Heart left ventricle (tissue), 16 donors: ENCODE measurements at regions of chr16 and their contacts with region 1.

Region 1: GRCh38 chr16:27313422-27314160 is at the start of gene IL4R:
- DNase-seq: peak; percentile 78 to 89 (median 85)
- ATAC-seq: peak; percentile 21 to 62 (median 48)
- H3K4me3 ChIP-seq: peak within 1 kb of the TSS; percentile 63 to 99 (median 86)
- H3K27ac ChIP-seq: peak within 1 kb of the TSS; percentile 89 to 99 (median 96)
- H3K4me1 ChIP-seq: peaks cover 4 to 53% (median 29%) of the 10 kb centered on the region in 12 donors
- H3K27me3 ChIP-seq: peaks cover 0 to 6% (median 0%) of the 10 kb centered on the region in 9 donors
- CTCF ChIP-seq: no peak
- POLR2A ChIP-seq: peak in 1 of 2 donors; percentile 53
- total RNA-seq, gene IL4R: 6.7 to 47.4 (median 8.2) TPM

Region 2: DNA sequence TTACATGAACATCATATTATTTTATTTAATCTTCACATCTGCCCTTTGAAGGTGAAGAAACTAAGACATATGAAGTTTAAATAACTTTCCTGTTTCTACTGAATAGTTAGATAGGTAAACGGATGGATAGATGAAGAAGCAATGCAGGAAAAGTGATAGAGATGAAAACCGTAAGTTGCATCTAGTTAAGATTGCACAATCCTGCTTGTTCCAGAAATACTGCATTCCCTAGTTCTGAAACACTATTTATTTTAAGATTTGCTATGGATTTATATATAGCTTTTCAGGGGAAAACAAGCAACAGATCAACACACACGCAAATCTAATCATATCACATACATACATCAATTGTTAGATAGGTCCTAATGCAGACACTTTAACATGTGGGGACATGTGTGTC is 759.6 kb before region 1 on chr16:
- intact Hi-C with region 1: no loop called
- DNase-seq: no peak
- ATAC-seq: no peak
- H3K4me3 ChIP-seq: no peak overlapping the region
- H3K27ac ChIP-seq: no peak overlapping the region
- H3K4me1 ChIP-seq: no peaks in the 10 kb centered on the region
- H3K27me3 ChIP-seq: peaks cover 0 to 4% (median 0%) of the 10 kb centered on the region in 9 donors
- CTCF ChIP-seq: no peak
- POLR2A ChIP-seq: no peak

Region 3: GRCh38 chr16:27235055-27235937 is 78.3 kb before region 1 on chr16:
- intact Hi-C with region 1: loop called in 7 of 10 experiments (anchors 1 to 10 kb)
- DNase-seq: peak; percentile 88 to 94 (median 91)
- ATAC-seq: peak; percentile 57 to 82 (median 81)
- H3K4me3 ChIP-seq: peak overlapping the region in 7 of 12 donors; percentile 5 to 31 (median 11)
- H3K27ac ChIP-seq: peak overlapping the region; percentile 24 to 91 (median 60)
- H3K4me1 ChIP-seq: peaks cover 0 to 73% (median 35%) of the 10 kb centered on the region in 12 donors
- H3K27me3 ChIP-seq: no peaks in the 10 kb centered on the region
- CTCF ChIP-seq: peak; percentile 67 to 93 (median 82)
- POLR2A ChIP-seq: no peak

Region 4: DNA sequence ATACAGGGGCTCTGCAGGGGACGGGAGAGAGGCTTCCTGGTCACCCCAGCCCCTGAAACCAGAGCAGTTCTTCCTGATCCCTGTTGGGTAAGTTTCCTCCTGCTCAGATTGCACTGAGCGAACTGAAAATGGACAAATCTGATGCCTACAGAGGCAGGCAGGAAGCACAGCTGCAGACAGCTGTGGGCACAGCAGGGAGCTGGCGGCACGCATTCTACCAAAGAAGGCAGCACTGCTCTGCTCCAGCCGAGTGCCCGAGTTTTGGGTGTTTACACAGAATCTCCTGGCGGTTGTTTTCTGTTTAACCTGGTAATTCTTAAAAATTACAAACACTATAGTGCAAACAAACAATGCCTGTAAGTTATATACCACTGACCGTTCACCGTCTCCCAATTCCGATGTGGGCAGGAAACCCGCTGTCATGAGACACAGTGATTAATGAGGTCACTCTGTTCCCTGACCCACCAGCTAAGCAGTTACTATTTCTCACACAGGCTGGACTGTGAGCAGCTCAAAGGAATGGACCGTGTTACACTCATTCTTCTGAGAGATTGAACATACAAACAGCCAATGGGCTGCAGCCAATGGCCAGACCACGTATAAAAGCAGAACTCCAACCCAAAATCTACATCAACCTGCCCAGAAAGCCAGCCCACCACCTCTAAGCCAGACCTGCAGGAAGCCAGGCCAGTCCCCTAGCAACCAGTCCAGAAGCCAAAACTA is 70.6 kb before region 1 on chr16:
- intact Hi-C with region 1: loop called in 6 of 10 experiments (anchors 5 to 10 kb)
- DNase-seq: peak in 4 of 5 donors; percentile 43 to 72 (median 62)
- ATAC-seq: peak; percentile 66 to 76 (median 72)
- H3K4me3 ChIP-seq: peak overlapping the region in 8 of 12 donors; percentile 17 to 33 (median 26)
- H3K27ac ChIP-seq: peak overlapping the region; percentile 7 to 82 (median 57)
- H3K4me1 ChIP-seq: peaks cover 0 to 75% (median 40%) of the 10 kb centered on the region in 12 donors
- H3K27me3 ChIP-seq: no peaks in the 10 kb centered on the region
- CTCF ChIP-seq: no peak
- POLR2A ChIP-seq: no peak

Region 5: GRCh38 chr16:27268376-27269299 is 45.0 kb before region 1 on chr16 and contains the start of gene NSMCE1:
- intact Hi-C with region 1: loop called in 2 of 10 experiments (anchors 5 kb)
- DNase-seq: peak; percentile 98 to 99 (median 99)
- ATAC-seq: peak; percentile 99 to 100 (median 100)
- H3K4me3 ChIP-seq: peak within 1 kb of the TSS; percentile 42 to 97 (median 88)
- H3K27ac ChIP-seq: peak within 1 kb of the TSS; percentile 52 to 90 (median 76)
- H3K4me1 ChIP-seq: peaks cover 0 to 42% (median 8%) of the 10 kb centered on the region in 12 donors
- H3K27me3 ChIP-seq: no peaks in the 10 kb centered on the region
- CTCF ChIP-seq: peak in 9 of 12 donors; percentile 1 to 44 (median 22)
- POLR2A ChIP-seq: peak in 1 of 2 donors; percentile 74
- total RNA-seq, gene NSMCE1: 29.6 to 48.7 (median 36.8) TPM

Region 6: DNA sequence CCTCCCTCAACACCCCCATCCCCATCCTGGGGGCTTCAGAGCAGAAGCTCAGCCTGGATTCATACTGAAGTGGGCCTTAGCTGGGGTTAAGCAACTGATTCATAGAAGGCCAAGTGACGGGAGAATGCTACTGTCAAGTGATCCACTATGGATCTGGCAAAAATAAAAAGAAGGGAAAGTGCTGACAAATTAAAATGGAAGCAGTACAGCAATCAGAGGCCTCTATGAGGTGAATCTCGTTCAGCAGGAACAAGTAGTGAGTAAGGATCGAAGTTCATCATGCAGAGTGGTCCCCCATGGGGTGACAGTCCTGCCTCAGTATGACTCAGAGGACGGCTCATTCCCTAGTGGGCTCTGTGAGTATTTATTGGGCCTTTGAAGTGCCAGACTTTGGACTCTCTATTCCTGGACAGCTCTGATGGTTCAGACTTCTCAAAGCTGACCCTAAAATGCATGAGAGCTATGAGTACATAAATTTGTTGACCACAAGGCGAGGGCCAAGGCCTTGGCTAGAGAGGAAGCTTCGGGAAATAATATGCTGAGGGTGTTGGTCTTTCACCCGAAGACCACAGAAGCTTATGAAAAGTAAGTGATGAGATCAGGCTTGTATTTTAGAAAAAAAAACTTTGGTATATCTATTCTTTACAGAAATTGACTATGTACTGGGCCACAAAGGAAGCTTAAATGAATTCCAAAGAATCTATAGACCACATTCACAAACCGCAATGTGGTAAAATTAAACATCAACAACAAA is 39.7 kb before region 1 on chr16:
- intact Hi-C with region 1: loop called in 3 of 10 experiments (anchors 2 to 5 kb)
- DNase-seq: no peak
- ATAC-seq: no peak
- H3K4me3 ChIP-seq: no peak overlapping the region
- H3K27ac ChIP-seq: peak overlapping the region in 1 of 12 donors; percentile 42
- H3K4me1 ChIP-seq: peaks cover 0 to 46% (median 5%) of the 10 kb centered on the region in 12 donors
- H3K27me3 ChIP-seq: no peaks in the 10 kb centered on the region
- CTCF ChIP-seq: no peak
- POLR2A ChIP-seq: no peak